ENCODE measurements at regions of chr5 and their contacts with region 1.

Region 1: GRCh38 chr5:59126708-59127573 is 544.1 kb downstream of the RAB3C start:
- DNase-seq: no peak
- ATAC-seq: no peak
- H3K4me3 ChIP-seq: peak overlapping the region; percentile 2 to 56 (median 46)
- H3K4me3 Mint-ChIP-seq: no peak overlapping the region
- H3K27ac ChIP-seq: peak overlapping the region; percentile 37 to 62
- H3K27ac Mint-ChIP-seq: no peak overlapping the region
- H3K4me1 ChIP-seq: peaks cover 8 to 10% of the 10 kb centered on the region in 2 donors
- H3K4me1 Mint-ChIP-seq: peaks cover 9% of the 10 kb centered on the region
- H3K27me3 ChIP-seq: no peaks in the 10 kb centered on the region
- H3K27me3 Mint-ChIP-seq: no peaks in the 10 kb centered on the region
- CTCF ChIP-seq: no peak

Region 2: DNA sequence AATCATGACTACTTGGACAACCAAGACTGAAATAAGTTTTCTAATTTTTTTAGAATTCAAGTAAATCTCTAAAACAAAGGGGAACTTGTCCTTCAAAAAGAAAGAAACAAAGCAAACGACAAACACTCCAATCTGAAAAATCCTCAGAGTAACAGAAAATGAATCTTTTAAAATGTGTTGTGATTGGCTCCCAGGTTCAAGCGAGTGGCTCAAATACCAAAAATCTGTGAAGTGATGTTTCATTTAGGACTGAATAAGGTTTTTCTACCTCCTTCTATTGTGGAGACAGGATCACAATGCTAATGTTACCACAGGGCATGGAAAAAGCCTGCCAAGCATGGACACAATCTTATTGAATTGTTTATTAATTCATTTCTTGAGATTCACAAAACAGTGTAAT is 128.4 kb before region 1 on chr5:
- CTCF ChIA-PET with region 1: no interaction called
- POLR2A ChIA-PET with region 1: no interaction called
- intact Hi-C with region 1: no loop called
- DNase-seq: no peak
- ATAC-seq: no peak
- H3K4me3 ChIP-seq: no peak overlapping the region
- H3K4me3 Mint-ChIP-seq: no peak overlapping the region
- H3K27ac ChIP-seq: no peak overlapping the region
- H3K27ac Mint-ChIP-seq: no peak overlapping the region
- H3K4me1 ChIP-seq: no peaks in the 10 kb centered on the region
- H3K4me1 Mint-ChIP-seq: no peaks in the 10 kb centered on the region
- H3K27me3 ChIP-seq: no peaks in the 10 kb centered on the region
- H3K27me3 Mint-ChIP-seq: no peaks in the 10 kb centered on the region
- CTCF ChIP-seq: no peak

Region 3: DNA sequence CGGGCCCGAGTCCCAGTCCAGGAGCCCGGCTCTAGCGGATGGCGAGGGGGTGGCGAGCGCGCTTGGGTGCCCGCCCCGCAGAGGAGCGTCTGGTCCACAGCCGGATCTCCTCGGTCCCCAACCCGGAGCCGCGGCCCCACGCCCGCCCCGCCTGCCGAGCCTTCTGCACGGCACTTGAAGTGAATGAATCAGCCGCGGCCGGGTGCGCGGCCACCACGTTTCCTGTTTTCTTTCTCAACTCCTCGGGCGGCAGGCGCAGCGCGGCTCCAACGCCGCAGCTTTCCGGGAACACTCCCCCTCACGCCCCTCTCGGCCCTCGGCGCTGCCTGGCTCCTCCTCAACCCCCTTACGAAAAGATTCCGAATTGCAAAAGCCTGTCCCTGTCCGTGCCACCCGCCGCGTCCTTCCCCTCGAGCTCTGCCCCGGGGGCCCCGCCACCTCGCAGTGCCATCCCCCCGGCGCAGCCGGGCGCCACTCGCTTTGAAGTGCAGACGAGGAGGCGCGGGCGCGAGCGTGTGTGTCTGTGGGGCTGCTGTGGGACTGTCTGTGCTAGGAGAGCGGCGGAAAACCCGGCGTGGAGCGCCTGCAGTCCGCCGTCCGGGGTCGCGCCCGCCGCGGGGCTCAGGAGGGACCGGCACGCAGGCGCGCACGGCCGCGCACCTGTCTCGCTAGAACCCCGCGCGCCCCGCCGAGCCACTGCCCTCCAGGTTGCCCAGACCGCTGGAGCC is 87.5 kb before region 1 on chr5:
- CTCF ChIA-PET with region 1: interaction called, 21 read pairs
- POLR2A ChIA-PET with region 1: interaction called, 9 read pairs
- intact Hi-C with region 1: loop called (anchors 1 kb)
- DNase-seq: peak; percentile 68
- ATAC-seq: peak; percentile 75
- H3K4me3 ChIP-seq: peak overlapping the region; percentile 31 to 66 (median 53)
- H3K4me3 Mint-ChIP-seq: peak overlapping the region; percentile 96
- H3K27ac ChIP-seq: no peak overlapping the region
- H3K27ac Mint-ChIP-seq: peak overlapping the region; percentile 93
- H3K4me1 ChIP-seq: peaks cover 20% of the 10 kb centered on the region in 2 donors
- H3K4me1 Mint-ChIP-seq: peaks cover 30% of the 10 kb centered on the region
- H3K27me3 ChIP-seq: peaks cover 0 to 27% (median 13%) of the 10 kb centered on the region in 4 experiments
- H3K27me3 Mint-ChIP-seq: peaks cover 28% of the 10 kb centered on the region
- CTCF ChIP-seq: no peak

Region 4: GRCh38 chr5:59174248-59174844 is 47.4 kb after region 1 on chr5:
- CTCF ChIA-PET with region 1: interaction called, 13 read pairs
- POLR2A ChIA-PET with region 1: no interaction called
- intact Hi-C with region 1: no loop called
- DNase-seq: peak; percentile 33
- ATAC-seq: peak; percentile 56
- H3K4me3 ChIP-seq: no peak overlapping the region
- H3K4me3 Mint-ChIP-seq: no peak overlapping the region
- H3K27ac ChIP-seq: no peak overlapping the region
- H3K27ac Mint-ChIP-seq: no peak overlapping the region
- H3K4me1 ChIP-seq: peaks cover 0 to 5% of the 10 kb centered on the region in 2 donors
- H3K4me1 Mint-ChIP-seq: peaks cover 3% of the 10 kb centered on the region
- H3K27me3 ChIP-seq: no peaks in the 10 kb centered on the region
- H3K27me3 Mint-ChIP-seq: no peaks in the 10 kb centered on the region
- CTCF ChIP-seq: peak; percentile 62

Region 5: GRCh38 chr5:59198365-59198764 is 71.4 kb after region 1 on chr5:
- CTCF ChIA-PET with region 1: no interaction called
- POLR2A ChIA-PET with region 1: no interaction called
- intact Hi-C with region 1: no loop called
- DNase-seq: no peak
- ATAC-seq: no peak
- H3K4me3 ChIP-seq: no peak overlapping the region
- H3K4me3 Mint-ChIP-seq: no peak overlapping the region
- H3K27ac ChIP-seq: no peak overlapping the region
- H3K27ac Mint-ChIP-seq: no peak overlapping the region
- H3K4me1 ChIP-seq: no peaks in the 10 kb centered on the region
- H3K4me1 Mint-ChIP-seq: no peaks in the 10 kb centered on the region
- H3K27me3 ChIP-seq: no peaks in the 10 kb centered on the region
- H3K27me3 Mint-ChIP-seq: no peaks in the 10 kb centered on the region
- CTCF ChIP-seq: no peak

Region 6: GRCh38 chr5:59790399-59791125 is 663.6 kb after region 1 on chr5:
- CTCF ChIA-PET with region 1: no interaction called
- POLR2A ChIA-PET with region 1: no interaction called
- intact Hi-C with region 1: loop called (anchors 1 kb)
- DNase-seq: peak; percentile 78
- ATAC-seq: peak; percentile 84
- H3K4me3 ChIP-seq: peak overlapping the region in 2 of 5 experiments; percentile 1 to 48
- H3K4me3 Mint-ChIP-seq: peak overlapping the region; percentile 77
- H3K27ac ChIP-seq: peak overlapping the region; percentile 62 to 83
- H3K27ac Mint-ChIP-seq: peak overlapping the region; percentile 92
- H3K4me1 ChIP-seq: peaks cover 34% of the 10 kb centered on the region in 2 donors
- H3K4me1 Mint-ChIP-seq: peaks cover 60% of the 10 kb centered on the region
- H3K27me3 ChIP-seq: no peaks in the 10 kb centered on the region
- H3K27me3 Mint-ChIP-seq: no peaks in the 10 kb centered on the region
- CTCF ChIP-seq: no peak

Measured in B cell (primary cell).